Mucosa of descending colon (tissue), 3 donors: ENCODE measurements at regions of chr21 and their contacts with region 1.

Region 1: DNA sequence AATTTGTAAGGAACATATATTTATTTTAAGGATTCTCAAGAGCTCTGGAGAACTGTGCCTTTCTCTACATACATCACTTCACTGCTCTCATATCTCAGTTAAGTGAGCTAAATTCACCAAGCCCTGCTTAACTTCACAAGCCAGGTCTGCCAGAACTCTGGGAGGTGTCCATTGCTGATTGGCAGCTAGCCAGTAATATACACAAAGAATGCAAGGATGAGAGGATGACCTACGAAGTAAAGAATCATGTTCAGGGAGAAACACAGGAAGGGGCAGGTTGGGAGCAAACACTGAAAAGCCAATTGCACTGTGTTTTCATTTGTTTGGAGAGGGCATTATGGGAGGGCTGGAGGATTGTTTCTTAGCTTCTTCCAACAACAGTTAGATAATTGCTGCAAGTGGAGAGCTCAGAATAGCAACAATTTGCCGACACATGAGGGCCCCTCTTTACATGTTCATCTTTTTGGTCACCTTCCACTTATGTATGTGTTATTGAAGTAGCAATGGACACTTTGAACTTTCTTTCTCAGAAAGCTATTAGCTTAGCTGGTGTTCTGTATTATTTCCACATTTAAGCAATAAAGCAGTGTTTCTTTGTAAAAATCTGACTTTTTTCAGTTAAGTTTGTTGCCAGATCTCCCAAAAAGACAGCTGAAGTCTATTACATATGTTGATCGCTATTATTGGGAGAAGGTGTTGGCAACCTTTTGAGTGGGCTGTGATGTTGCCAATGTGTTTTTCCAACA is 254.8 kb downstream of the LTN1 start:
- DNase-seq: no peak
- ATAC-seq: no peak
- H3K4me3 ChIP-seq: no peak overlapping the region
- H3K4me1 ChIP-seq: no peaks in the 10 kb centered on the region
- CTCF ChIP-seq: no peak

Region 2: GRCh38 chr21:28522014-28522799 is 215.6 kb before region 1 on chr21:
- intact Hi-C with region 1: loop called in 1 of 2 experiments (anchors 10 kb)
- DNase-seq: peak in 1 of 3 donors; percentile 13
- ATAC-seq: no peak
- H3K4me3 ChIP-seq: no peak overlapping the region
- H3K4me1 ChIP-seq: no peaks in the 10 kb centered on the region
- CTCF ChIP-seq: no peak

Region 3: DNA sequence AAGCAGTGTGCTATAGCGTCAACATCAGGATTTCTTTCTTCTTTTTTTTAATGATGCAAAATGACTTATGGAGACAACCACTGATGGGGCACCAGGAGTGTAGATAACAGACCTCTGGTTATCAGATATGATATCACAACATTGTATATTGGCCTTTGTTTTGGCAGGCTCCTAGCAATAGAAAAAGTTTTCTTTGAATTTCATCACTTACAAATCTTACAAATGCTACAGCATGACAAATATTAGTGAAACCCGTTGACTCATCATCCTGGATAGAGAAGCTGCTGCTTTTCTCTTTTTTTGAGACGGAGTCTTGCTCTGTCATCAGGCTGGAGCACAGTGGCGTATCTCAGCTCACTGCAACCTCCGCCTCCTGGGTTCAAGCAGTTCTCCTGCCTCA is 161.9 kb after region 1 on chr21:
- intact Hi-C with region 1: no loop called
- DNase-seq: no peak
- ATAC-seq: no peak
- H3K4me3 ChIP-seq: no peak overlapping the region
- H3K4me1 ChIP-seq: no peaks in the 10 kb centered on the region
- CTCF ChIP-seq: no peak

Region 4: DNA sequence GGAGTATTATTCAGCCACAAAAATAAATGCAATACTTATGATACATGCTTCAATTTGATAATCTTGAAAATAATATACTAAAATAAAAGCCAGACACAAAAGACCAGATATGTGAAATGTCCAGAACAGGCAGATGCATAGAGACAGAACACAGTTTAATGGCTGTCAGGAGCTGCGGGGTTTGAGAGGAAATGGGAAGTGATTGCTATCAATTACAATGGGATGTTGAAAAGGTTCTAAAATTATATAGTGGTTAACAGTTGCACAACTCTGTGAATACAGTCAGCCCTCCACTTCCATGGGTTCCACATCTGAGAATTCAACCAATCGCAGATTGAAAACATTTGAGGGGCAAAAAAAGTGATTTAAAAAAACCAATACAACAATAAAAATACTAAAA is 200.9 kb after region 1 on chr21:
- intact Hi-C with region 1: no loop called
- DNase-seq: no peak
- ATAC-seq: no peak
- H3K4me3 ChIP-seq: no peak overlapping the region
- H3K4me1 ChIP-seq: peaks cover 4% of the 10 kb centered on the region
- CTCF ChIP-seq: no peak